ENCODE measurements at regions of chr9 and their contacts with region 1.

Region 1: DNA sequence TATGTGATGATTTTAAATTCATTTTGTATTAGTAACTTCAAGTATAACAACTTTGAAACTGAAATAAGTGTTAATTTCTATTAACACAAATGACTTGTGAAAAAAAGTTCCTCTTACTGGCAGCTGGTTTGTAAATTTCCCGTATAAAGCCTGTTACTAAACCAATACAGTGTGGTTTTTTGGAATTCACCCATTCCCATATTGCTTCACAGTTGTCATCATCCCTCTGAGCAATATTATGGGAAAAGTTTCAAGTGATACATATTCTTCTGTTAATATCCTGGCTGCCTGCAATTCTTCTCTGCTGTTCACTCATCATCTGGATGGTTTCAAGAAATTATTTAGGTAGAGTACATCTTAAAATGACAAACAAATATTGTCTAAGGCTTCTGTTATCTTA is 1185.1 kb upstream of the C9orf72 start:
- DNase-seq: no peak
- ATAC-seq: no peak
- H3K4me3 ChIP-seq: no peak overlapping the region
- H3K27ac ChIP-seq: no peak overlapping the region
- H3K4me1 ChIP-seq: no peaks in the 10 kb centered on the region
- H3K27me3 ChIP-seq: no peaks in the 10 kb centered on the region
- CTCF ChIP-seq: no peak
- POLR2A ChIP-seq: no peak

Region 2: GRCh38 chr9:28810375-28811075 is 52.2 kb after region 1 on chr9:
- intact Hi-C with region 1: loop called in 1 of 10 experiments (anchors 10 kb)
- DNase-seq: no peak
- ATAC-seq: no peak
- H3K4me3 ChIP-seq: no peak overlapping the region
- H3K27ac ChIP-seq: no peak overlapping the region
- H3K4me1 ChIP-seq: no peaks in the 10 kb centered on the region
- H3K27me3 ChIP-seq: no peaks in the 10 kb centered on the region
- CTCF ChIP-seq: no peak
- POLR2A ChIP-seq: no peak

Region 3: DNA sequence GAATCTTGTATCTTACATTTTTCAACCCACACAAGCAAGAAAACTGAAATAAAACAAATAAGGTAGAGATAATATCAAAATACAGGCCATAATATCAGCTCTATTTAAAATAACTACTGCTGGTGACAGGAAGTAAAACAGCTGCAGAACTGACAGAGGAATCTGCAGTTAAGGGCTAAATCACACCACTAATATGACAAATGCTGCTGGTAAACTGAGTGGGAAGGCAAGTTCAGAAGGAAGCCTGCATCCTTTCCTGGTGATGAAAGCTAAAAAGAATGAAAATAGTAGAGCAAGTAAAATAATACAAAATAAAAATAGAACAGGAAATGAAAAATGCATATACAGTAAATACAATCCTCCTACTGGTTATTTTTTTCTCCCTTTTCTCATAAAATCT is 108.6 kb after region 1 on chr9:
- intact Hi-C with region 1: no loop called
- DNase-seq: no peak
- ATAC-seq: no peak
- H3K4me3 ChIP-seq: no peak overlapping the region
- H3K27ac ChIP-seq: no peak overlapping the region
- H3K4me1 ChIP-seq: no peaks in the 10 kb centered on the region
- H3K27me3 ChIP-seq: no peaks in the 10 kb centered on the region
- CTCF ChIP-seq: no peak
- POLR2A ChIP-seq: no peak

Measured in heart left ventricle (tissue), 16 donors.